CD4-positive, alpha-beta T cell (primary cell): ENCODE measurements at regions of chr21 and their contacts with region 1.

Region 1: DNA sequence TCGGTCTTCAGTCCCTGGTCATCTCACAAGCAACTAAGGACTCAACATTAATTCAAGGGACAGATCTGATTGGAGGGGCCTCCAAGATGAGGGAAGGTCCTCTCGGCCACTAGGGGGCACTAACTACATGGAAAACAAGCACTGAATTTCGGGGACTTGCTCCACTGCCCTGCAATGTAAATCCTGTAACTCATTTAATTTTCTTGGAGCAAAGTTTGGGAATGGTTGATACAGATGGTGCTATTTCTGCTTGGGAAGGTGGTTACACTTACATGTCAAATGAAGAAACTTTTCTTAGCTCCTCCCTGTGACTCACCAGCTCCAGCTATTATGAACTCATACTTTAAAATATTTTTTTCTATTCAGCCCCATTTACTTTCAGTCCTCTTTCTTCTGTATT is 97.4 kb upstream of the KCNJ15 start:
- DNase-seq: peak; percentile 32 to 75 (median 46)
- ATAC-seq: peak; percentile 44
- H3K4me3 ChIP-seq: no peak overlapping the region
- H3K4me3 Mint-ChIP-seq: no peak overlapping the region
- H3K27ac ChIP-seq: no peak overlapping the region
- H3K27ac Mint-ChIP-seq: no peak overlapping the region
- H3K4me1 ChIP-seq: no peaks in the 10 kb centered on the region
- H3K4me1 Mint-ChIP-seq: no peaks in the 10 kb centered on the region
- H3K27me3 ChIP-seq: peaks cover 0 to 5% of the 10 kb centered on the region in 2 experiments
- H3K27me3 Mint-ChIP-seq: peaks cover 43% of the 10 kb centered on the region
- CTCF ChIP-seq: peak; percentile 77

Region 2: DNA sequence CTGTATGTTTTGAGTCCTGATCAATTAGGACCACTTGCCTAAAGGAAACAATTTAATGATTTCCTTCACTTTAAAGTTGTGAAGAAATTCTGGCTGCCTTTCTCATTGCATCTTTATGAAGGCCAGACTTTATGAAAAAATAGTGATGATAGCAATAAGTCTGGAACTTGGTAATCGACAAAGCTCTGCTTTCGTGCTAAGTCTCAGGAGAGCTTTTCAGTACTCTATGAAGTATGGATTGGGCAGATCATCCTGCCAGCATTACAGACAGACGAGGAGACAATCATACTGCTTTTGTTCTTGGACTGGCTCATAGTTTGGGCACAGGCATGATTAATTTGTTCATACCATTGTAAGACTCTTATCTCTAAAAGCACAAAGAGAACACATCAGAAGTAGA is 52.0 kb after region 1 on chr21:
- CTCF ChIA-PET with region 1: interaction called, 3 read pairs
- POLR2A ChIA-PET with region 1: no interaction called
- intact Hi-C with region 1: loop called in 1 of 2 experiments (anchors 5 kb)
- DNase-seq: no peak
- ATAC-seq: no peak
- H3K4me3 ChIP-seq: no peak overlapping the region
- H3K4me3 Mint-ChIP-seq: no peak overlapping the region
- H3K27ac ChIP-seq: no peak overlapping the region
- H3K27ac Mint-ChIP-seq: no peak overlapping the region
- H3K4me1 ChIP-seq: peaks cover 2% of the 10 kb centered on the region
- H3K4me1 Mint-ChIP-seq: peaks cover 6% of the 10 kb centered on the region
- H3K27me3 ChIP-seq: peaks cover 3 to 7% of the 10 kb centered on the region in 2 experiments
- H3K27me3 Mint-ChIP-seq: peaks cover 33% of the 10 kb centered on the region
- CTCF ChIP-seq: no peak

Region 3: GRCh38 chr21:38219049-38219628 is 59.8 kb after region 1 on chr21:
- CTCF ChIA-PET with region 1: no interaction called
- POLR2A ChIA-PET with region 1: no interaction called
- intact Hi-C with region 1: loop called (anchors 2 to 5 kb)
- DNase-seq: peak; percentile 29 to 83 (median 54)
- ATAC-seq: peak; percentile 67
- H3K4me3 ChIP-seq: no peak overlapping the region
- H3K4me3 Mint-ChIP-seq: no peak overlapping the region
- H3K27ac ChIP-seq: no peak overlapping the region
- H3K27ac Mint-ChIP-seq: no peak overlapping the region
- H3K4me1 ChIP-seq: peaks cover 3% of the 10 kb centered on the region
- H3K4me1 Mint-ChIP-seq: no peaks in the 10 kb centered on the region
- H3K27me3 ChIP-seq: no peaks in the 10 kb centered on the region
- H3K27me3 Mint-ChIP-seq: no peaks in the 10 kb centered on the region
- CTCF ChIP-seq: peak; percentile 96